ENCODE measurements at regions of chrX and their contacts with region 1.

Region 1: DNA sequence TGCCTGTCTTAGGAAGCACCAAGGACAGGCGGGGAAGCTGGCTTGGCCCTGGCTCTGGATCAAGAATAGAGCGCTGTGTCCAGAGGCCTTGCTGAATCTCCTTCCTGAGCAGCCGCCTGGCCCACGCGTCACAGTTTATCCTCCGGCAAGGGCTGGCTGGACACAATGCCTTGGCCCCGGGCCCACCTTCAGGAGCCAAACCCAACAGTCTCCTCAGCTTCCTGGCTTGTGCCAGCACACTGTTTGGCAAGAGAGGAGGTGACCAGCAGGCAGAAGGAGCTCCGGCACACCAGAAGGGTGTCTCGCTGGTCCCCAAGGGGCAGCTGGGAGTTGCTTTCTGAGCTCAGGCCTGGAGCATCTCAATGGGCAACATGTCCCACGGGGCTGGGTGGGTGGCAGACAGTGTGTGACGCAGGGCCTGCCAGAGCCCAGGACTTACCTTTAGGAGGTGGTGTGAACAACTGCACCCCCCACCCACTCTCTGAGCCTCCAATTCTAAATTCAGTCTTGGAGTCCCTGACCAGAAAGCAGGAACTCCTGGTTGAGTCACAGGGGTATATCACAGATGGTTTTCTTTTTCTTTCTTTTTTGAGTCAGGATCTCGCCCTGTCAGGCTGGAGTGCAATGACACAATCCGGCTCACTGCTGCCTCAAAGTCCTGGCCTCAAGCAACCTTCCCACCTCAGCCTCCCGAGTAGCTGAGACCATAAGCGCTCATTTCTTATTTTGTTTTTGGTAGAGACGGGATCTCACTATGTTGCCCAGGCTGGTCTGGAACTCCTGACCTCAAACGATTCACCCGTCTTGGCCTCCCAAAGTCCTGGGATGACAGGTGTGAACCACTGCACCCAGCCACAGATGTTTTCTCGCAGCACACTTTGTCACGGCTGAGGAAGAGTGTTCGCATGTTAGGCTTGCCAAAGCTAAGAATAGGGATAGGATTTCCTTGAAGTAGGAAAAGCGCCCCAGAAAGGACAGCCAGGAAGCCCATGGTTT is 361.2 kb downstream of the BCOR start:
- DNase-seq: peak; percentile 57 to 85
- ATAC-seq: peak; percentile 85 to 91
- H3K4me3 ChIP-seq: no peak overlapping the region
- H3K27ac ChIP-seq: peak overlapping the region; percentile 28 to 74 (median 42)
- H3K4me1 ChIP-seq: peaks cover 8 to 9% of the 10 kb centered on the region in 2 donors
- H3K27me3 ChIP-seq: no peaks in the 10 kb centered on the region
- CTCF ChIP-seq: no peak
- POLR2A ChIP-seq: no peak

Region 2: DNA sequence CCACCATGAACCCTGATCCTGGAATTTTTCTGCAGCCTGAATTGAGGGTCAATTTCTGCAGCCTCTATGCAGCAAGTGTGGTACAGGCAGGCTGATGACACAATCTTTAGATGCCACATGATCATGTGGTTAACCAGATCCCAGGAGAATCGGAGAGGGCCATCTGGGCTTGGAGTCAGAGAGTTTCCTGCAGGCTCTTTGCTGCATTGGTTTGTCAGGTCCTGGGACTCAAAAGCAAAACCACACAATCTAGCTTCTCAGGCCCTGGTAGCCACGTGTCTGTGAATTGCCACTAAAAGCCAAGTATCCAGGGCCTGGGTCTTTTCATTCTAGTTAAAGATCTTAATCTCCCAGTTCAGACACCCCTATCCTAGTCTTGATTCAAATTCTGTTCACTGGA is 103.2 kb before region 1 on chrX:
- in situ Hi-C with region 1: no loop called
- intact Hi-C with region 1: no loop called
- DNase-seq: no peak
- ATAC-seq: no peak
- H3K4me3 ChIP-seq: no peak overlapping the region
- H3K27ac ChIP-seq: no peak overlapping the region
- H3K4me1 ChIP-seq: no peaks in the 10 kb centered on the region
- H3K27me3 ChIP-seq: peaks cover 0 to 8% (median 0%) of the 10 kb centered on the region in 3 donors
- CTCF ChIP-seq: no peak
- POLR2A ChIP-seq: no peak

Region 3: GRCh38 chrX:39755143-39756032 is 18.9 kb after region 1 on chrX:
- in situ Hi-C with region 1: no loop called
- intact Hi-C with region 1: loop called (anchors 1 kb)
- DNase-seq: peak; percentile 59 to 78
- ATAC-seq: peak; percentile 79 to 87
- H3K4me3 ChIP-seq: no peak overlapping the region
- H3K27ac ChIP-seq: peak overlapping the region; percentile 60 to 67 (median 63)
- H3K4me1 ChIP-seq: peaks cover 10 to 12% of the 10 kb centered on the region in 2 donors
- H3K27me3 ChIP-seq: no peaks in the 10 kb centered on the region
- CTCF ChIP-seq: no peak
- POLR2A ChIP-seq: no peak